ENCODE measurements at regions of chr12 and their contacts with region 1.

Region 1: DNA sequence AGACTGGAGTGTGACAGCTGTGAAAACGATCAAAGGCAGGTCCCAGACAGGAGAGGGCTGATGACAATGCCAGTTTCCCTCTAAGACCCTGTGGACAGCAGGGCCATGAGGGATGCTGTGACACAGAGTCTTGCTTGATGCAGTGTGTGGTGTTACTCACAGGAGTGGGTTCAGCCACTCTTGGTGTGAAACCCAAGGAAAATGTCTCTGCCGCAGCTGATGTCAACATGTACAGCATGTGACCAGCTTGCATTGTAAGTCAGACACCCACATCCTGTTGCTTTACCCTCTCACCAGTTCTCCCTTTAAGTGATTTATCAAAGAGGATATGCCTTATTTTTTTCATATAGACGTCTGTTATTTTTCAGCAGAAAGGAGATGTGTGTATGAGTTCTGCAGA is 268.6 kb downstream of the BTG1 start:
- DNase-seq: peak; percentile 73 to 96 (median 93)
- H3K4me3 ChIP-seq: peak overlapping the region; percentile 42
- H3K4me3 Mint-ChIP-seq: peak overlapping the region; percentile 55 to 84 (median 75)
- H3K27ac ChIP-seq: peak overlapping the region; percentile 79
- H3K27ac Mint-ChIP-seq: peak overlapping the region; percentile 95 to 100 (median 100)
- H3K4me1 ChIP-seq: peaks cover 70% of the 10 kb centered on the region
- H3K4me1 Mint-ChIP-seq: peaks cover 78 to 85% (median 84%) of the 10 kb centered on the region in 3 donors
- H3K27me3 ChIP-seq: no peaks in the 10 kb centered on the region
- H3K27me3 Mint-ChIP-seq: no peaks in the 10 kb centered on the region

Region 2: DNA sequence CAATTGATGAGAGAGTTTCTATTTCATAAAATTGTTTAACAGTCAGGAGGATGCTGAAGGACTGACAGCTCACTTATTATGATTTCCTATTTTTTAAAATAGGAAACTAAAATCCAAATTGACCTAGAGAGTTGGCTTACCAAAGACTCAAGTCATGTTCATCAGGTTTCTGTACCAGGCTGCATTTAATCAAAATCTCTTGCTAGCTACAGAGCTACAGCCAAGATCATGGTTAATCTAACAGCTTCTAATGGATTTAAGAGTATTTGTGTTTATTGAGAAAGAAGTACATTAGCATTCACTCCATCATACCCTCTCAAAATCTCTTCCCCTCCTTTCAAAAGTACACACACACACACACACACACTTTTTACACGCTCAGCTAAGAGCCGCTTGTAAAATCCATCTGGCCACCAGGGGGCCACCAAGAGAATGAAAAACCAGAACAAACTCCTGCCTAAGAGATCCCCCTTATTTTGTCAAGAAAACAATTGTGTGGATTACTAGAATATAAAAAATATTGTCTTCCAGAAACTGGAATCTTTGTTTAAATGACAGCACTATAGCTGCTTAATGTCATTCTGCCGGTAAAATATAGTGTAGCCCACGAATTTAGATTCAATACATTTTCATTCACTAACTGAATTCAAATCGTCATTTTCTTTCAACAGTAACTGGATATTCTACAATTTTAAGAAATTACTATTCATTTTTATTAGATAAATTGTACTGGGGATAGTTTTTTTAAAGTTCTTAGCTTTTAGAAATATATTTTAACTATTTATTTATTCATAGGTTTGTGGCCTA is 65.3 kb before region 1 on chr12:
- CTCF ChIA-PET with region 1: interaction called, 10 read pairs
- POLR2A ChIA-PET with region 1: no interaction called
- DNase-seq: peak; percentile 56 to 80 (median 62)
- H3K4me3 ChIP-seq: no peak overlapping the region
- H3K4me3 Mint-ChIP-seq: peak overlapping the region in 5 of 7 donors; percentile 1 to 60 (median 30)
- H3K27ac ChIP-seq: no peak overlapping the region
- H3K27ac Mint-ChIP-seq: peak overlapping the region in 7 of 8 donors; percentile 12 to 91 (median 88)
- H3K4me1 ChIP-seq: peaks cover 12% of the 10 kb centered on the region
- H3K4me1 Mint-ChIP-seq: peaks cover 20 to 38% (median 36%) of the 10 kb centered on the region in 3 donors
- H3K27me3 ChIP-seq: no peaks in the 10 kb centered on the region
- H3K27me3 Mint-ChIP-seq: peaks cover 0 to 1% of the 10 kb centered on the region in 2 donors

Region 3: GRCh38 chr12:91833780-91834359 is 43.2 kb before region 1 on chr12:
- CTCF ChIA-PET with region 1: no interaction called
- POLR2A ChIA-PET with region 1: no interaction called
- DNase-seq: no peak
- H3K4me3 ChIP-seq: no peak overlapping the region
- H3K4me3 Mint-ChIP-seq: no peak overlapping the region
- H3K27ac ChIP-seq: no peak overlapping the region
- H3K27ac Mint-ChIP-seq: peak overlapping the region in 3 of 8 donors; percentile 3 to 58 (median 17)
- H3K4me1 ChIP-seq: no peaks in the 10 kb centered on the region
- H3K4me1 Mint-ChIP-seq: peaks cover 1 to 16% (median 7%) of the 10 kb centered on the region in 3 donors
- H3K27me3 ChIP-seq: no peaks in the 10 kb centered on the region
- H3K27me3 Mint-ChIP-seq: no peaks in the 10 kb centered on the region

Region 4: DNA sequence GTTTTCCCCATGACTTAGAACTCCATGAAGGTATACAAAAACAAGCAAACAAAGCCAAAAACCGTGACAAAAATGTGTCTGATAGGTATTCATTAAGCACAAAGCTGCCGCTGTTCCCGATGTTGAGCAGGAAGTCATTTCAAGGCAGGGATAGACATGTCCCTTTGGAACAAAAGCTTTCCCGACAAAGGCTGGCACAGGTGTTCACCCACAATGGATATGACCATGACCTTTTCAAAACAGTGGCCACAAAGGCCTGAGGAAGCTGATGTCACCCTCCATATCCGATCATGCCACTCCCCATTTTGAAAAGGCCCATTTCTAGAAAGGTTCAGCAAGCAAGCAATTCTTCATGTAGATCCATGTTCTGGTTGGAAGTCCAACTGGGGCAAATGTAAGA is 10.5 kb before region 1 on chr12:
- CTCF ChIA-PET with region 1: interaction called, 10 read pairs
- POLR2A ChIA-PET with region 1: no interaction called
- DNase-seq: no peak
- H3K4me3 ChIP-seq: no peak overlapping the region
- H3K4me3 Mint-ChIP-seq: no peak overlapping the region
- H3K27ac ChIP-seq: no peak overlapping the region
- H3K27ac Mint-ChIP-seq: peak overlapping the region in 2 of 8 donors; percentile 49 to 56
- H3K4me1 ChIP-seq: peaks cover 39% of the 10 kb centered on the region
- H3K4me1 Mint-ChIP-seq: peaks cover 21 to 39% (median 31%) of the 10 kb centered on the region in 3 donors
- H3K27me3 ChIP-seq: no peaks in the 10 kb centered on the region
- H3K27me3 Mint-ChIP-seq: peaks cover 0 to 1% of the 10 kb centered on the region in 2 donors